Right ventricle myocardium inferior (tissue), 1 donor: ENCODE measurements at regions of chr3 and their contacts with region 1.

Region 1: DNA sequence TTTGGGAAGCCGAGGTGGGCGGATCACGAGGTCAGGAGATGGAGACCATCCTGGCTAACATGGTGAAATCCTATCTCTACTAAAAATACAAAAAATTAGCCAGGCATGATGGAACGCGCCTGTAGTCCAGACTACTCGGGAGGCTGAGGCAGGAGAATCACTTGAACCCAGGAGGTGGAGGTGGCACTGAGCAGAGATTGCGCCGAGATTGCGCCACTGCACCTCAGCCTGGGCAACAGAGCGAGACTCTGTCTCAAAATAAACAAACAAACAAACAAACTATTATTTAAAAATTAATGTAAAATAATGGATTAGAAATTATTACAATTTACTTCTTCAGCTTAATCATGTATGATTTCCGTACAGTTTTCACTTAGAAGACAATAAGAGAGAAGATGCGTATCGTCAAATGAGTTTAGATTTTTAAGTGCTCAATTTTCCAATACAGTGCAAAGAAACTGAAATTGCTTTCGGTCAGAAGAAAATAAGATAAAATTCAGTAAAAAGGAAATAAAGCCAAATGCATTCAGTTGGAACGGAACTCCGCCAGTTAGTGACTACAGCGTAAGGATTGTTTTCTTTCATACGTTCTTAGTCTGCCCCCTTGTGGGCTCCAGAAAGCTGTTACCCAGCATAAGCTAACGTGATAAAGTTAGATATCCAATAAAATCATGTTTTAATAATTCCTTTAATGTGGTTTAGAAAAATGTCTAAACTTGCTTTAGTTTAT is 24.8 kb downstream of the AADAC start:
- DNase-seq: no peak
- ATAC-seq: peak; percentile 79

Region 2: GRCh38 chr3:151350656-151351618 is 487.8 kb before region 1 on chr3:
- intact Hi-C with region 1: no loop called
- DNase-seq: no peak
- ATAC-seq: no peak

Region 3: DNA sequence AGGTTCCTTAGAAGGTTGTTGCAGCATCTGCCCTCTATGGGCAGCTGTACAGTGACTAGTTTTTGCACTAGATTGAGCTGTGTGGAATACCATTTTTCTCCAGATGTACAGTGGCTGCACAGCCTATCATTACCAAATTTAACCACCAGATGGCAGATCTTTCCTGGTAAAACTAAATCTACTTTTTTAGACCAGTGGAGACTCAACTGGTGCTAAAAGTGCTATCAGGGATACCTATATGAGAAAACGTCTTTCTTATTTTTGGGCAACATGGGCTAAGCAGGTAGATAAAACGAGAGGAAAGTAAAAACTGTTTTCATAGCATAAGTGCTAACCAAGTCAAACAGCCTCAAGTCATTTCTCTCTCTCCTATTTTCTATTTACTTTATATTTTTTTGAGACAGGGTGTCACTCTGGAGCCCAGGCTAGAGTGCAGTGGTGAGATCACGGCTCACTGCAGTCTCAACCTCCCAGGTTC is 399.1 kb before region 1 on chr3:
- intact Hi-C with region 1: loop called (anchors 2 kb)
- DNase-seq: no peak
- ATAC-seq: peak; percentile 76

Region 4: GRCh38 chr3:151468284-151468917 is 370.3 kb before region 1 on chr3:
- intact Hi-C with region 1: loop called (anchors 5 kb)
- DNase-seq: no peak
- ATAC-seq: peak; percentile 63

Region 5: GRCh38 chr3:151918253-151919029 is 79.7 kb after region 1 on chr3:
- intact Hi-C with region 1: loop called (anchors 5 kb)
- DNase-seq: no peak
- ATAC-seq: no peak

Region 6: DNA sequence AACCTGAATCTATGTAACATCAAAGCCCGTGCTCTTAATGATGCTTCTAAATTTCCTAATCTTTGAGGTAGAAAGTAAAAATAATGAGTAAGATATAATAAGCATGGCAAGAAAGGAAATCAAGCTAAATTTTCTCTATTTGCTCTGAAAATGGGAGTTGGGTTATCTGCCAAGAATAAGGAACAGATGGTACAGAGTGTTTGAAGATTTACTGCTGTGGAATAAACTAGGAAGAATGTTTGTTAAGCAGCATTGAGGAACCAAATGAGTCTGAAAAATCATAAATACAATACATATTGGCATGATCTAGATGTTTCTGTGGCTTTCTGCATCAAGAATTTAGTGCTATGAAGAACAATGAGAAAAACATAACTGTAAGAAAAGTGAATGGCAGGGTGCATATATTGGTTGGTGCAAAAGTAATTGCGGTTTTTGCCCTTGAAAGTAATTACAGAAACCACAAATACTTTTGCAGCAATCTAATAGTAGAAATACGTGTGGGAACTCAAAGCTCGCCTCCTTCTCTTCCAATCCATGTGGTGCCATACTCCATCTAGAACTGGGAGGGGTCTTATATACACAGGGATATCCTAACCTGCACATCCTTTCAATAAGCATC is 122.3 kb after region 1 on chr3:
- intact Hi-C with region 1: no loop called
- DNase-seq: no peak
- ATAC-seq: no peak